ENCODE measurements at regions of chr1 and their contacts with region 1.

Region 1: GRCh38 chr1:39269791-39270342 is 65.4 kb downstream of the MACF1 start:
- DNase-seq: peak in 3 of 42 donors; percentile 23 to 35 (median 30)

Region 2: GRCh38 chr1:39132505-39133339 is 137.1 kb before region 1 on chr1:
- intact Hi-C with region 1: no loop called
- DNase-seq: peak in 41 of 42 donors; percentile 15 to 75 (median 40)

Region 3: DNA sequence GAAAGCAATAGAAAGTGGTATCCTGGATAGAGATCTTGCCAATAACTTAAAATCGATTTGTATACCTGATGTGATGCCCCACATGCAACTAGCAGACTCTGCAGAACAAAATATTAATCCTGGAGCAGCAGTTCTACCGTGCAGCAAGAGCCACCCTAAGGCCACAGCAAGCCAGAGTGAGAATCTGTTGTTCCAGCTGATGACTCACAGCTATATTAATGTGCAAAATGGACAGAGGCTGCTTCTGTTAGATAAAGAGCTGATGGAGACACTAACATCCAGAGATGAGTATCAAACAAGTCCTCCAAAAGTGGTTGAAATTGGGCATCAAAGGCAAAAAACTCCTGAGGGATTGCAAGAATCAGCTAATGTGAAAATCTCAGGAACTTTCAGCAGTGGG is 62.4 kb after region 1 on chr1:
- intact Hi-C with region 1: loop called (anchors 10 kb)
- DNase-seq: peak in 17 of 42 donors; percentile 16 to 66 (median 29)

Region 4: DNA sequence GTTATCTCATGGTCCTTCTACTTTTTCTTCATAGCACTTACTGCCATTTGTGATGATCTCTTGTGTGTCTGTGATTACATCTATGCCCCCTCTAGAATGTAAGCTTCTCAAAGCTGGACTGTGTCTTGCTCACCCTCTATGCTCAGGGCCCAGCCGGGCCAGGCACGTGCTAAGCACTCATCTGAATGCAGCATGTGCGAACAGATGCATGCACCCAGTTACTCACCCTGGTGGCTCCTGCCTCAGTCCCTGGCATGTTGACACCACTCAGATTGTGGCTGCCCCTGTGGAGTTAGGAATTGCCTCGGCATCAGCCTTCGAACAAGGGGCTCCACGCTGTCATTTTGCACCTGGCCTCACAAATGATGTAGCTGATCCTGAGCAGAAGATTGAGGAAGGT is 326.3 kb after region 1 on chr1:
- intact Hi-C with region 1: no loop called
- DNase-seq: no peak